ENCODE measurements at regions of chr19 and their contacts with region 1.

Region 1: GRCh38 chr19:35451338-35452096 is 3.5 kb downstream of the FFAR2 start:
- DNase-seq: peak; percentile 63
- H3K4me3 Mint-ChIP-seq: no peak overlapping the region
- H3K27ac Mint-ChIP-seq: peak overlapping the region; percentile 43
- H3K4me1 Mint-ChIP-seq: peaks cover 38% of the 10 kb centered on the region
- H3K27me3 Mint-ChIP-seq: peaks cover 9% of the 10 kb centered on the region

Region 2: GRCh38 chr19:35404879-35405622 is 46.5 kb before region 1 on chr19:
- CTCF ChIA-PET with region 1: interaction called, 5 read pairs
- POLR2A ChIA-PET with region 1: interaction called, 3 read pairs
- intact Hi-C with region 1: loop called (anchors 1 kb)
- DNase-seq: peak; percentile 90
- H3K4me3 Mint-ChIP-seq: no peak overlapping the region
- H3K27ac Mint-ChIP-seq: peak overlapping the region; percentile 55
- H3K4me1 Mint-ChIP-seq: peaks cover 16% of the 10 kb centered on the region
- H3K27me3 Mint-ChIP-seq: no peaks in the 10 kb centered on the region

Region 3: GRCh38 chr19:35436477-35437405 is 14.8 kb before region 1 on chr19:
- CTCF ChIA-PET with region 1: interaction called, 4 read pairs
- POLR2A ChIA-PET with region 1: no interaction called
- intact Hi-C with region 1: loop called (anchors 1 kb)
- DNase-seq: peak; percentile 51
- H3K4me3 Mint-ChIP-seq: peak overlapping the region; percentile 1
- H3K27ac Mint-ChIP-seq: no peak overlapping the region
- H3K4me1 Mint-ChIP-seq: peaks cover 18% of the 10 kb centered on the region
- H3K27me3 Mint-ChIP-seq: peaks cover 13% of the 10 kb centered on the region

Region 4: DNA sequence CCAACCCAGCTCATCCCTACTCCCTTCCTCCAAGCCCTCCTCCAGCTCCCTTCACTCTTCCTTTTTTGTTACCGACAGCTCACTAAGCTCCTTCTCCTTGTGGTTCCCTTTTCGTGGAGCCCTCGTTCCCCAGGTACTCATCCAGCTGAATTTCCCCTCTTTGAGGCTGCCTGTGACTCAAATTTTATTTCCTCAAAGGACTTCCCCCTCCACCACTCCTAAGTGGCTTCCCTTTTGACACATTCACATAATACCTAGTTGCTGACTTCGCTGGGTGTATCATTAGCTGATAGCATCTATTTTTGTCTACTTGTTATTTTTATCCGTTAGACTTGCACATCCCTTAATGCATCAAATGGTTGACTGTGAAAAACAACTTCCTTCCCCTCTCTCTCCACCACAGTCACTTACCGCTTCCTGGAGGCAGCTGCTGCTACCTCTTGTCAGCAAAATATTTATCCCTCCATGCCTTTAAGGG is 11.0 kb after region 1 on chr19:
- CTCF ChIA-PET with region 1: interaction called, 14 read pairs
- POLR2A ChIA-PET with region 1: interaction called, 7 read pairs
- intact Hi-C with region 1: loop called (anchors 1 kb)
- DNase-seq: peak; percentile 56
- H3K4me3 Mint-ChIP-seq: peak overlapping the region; percentile 18
- H3K27ac Mint-ChIP-seq: peak overlapping the region; percentile 76
- H3K4me1 Mint-ChIP-seq: peaks cover 29% of the 10 kb centered on the region
- H3K27me3 Mint-ChIP-seq: peaks cover 2% of the 10 kb centered on the region

Region 5: GRCh38 chr19:35468637-35469036 is 17.1 kb after region 1 on chr19:
- CTCF ChIA-PET with region 1: interaction called, 14 read pairs
- POLR2A ChIA-PET with region 1: interaction called, 3 read pairs
- intact Hi-C with region 1: loop called (anchors 2 kb)
- DNase-seq: peak; percentile 77
- H3K4me3 Mint-ChIP-seq: no peak overlapping the region
- H3K27ac Mint-ChIP-seq: peak overlapping the region; percentile 20
- H3K4me1 Mint-ChIP-seq: peaks cover 7% of the 10 kb centered on the region
- H3K27me3 Mint-ChIP-seq: no peaks in the 10 kb centered on the region